Activated CD8-positive, alpha-beta T cell treated with anti-CD3 and anti-CD28 coated beads for 36 hours (primary cell): ENCODE measurements at regions of chr10 and their contacts with region 1.

Region 1: DNA sequence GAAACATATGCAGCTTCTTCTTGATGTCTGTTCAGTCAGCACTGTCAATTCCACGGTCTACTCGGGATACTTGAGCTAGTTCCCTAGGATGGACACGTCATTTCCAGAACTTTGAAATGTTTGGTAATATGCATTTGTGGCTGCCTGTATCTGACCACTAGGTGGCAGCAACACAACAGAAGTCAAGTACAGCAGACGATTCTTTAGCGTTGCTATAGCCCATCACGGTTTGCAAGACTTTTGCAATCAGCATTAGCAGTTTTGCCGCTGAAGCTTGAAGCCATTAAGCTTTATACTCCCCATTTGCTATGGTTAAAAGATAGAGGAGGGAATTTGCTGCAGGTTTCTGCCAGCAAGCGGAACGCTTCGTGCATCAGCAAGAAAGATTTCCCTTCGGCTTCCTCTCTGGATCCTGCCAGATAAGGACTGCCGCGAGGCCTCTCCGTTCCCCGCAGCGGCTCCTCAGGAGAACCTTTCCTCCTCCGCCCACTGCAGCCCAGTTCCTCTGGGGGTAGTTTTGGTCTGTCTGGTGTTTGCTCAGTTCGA is 63.5 kb downstream of the ABCC2 start:
- DNase-seq: peak; percentile 81
- ATAC-seq: peak; percentile 94
- H3K4me3 Mint-ChIP-seq: no peak overlapping the region
- H3K27ac Mint-ChIP-seq: no peak overlapping the region
- H3K4me1 Mint-ChIP-seq: peaks cover 5% of the 10 kb centered on the region
- H3K27me3 Mint-ChIP-seq: no peaks in the 10 kb centered on the region
- CTCF ChIP-seq: peak; percentile 89

Region 2: GRCh38 chr10:99676426-99676825 is 169.5 kb before region 1 on chr10:
- CTCF ChIA-PET with region 1: no interaction called
- POLR2A ChIA-PET with region 1: no interaction called
- intact Hi-C with region 1: no loop called
- DNase-seq: no peak
- ATAC-seq: no peak
- H3K4me3 Mint-ChIP-seq: no peak overlapping the region
- H3K27ac Mint-ChIP-seq: no peak overlapping the region
- H3K4me1 Mint-ChIP-seq: peaks cover 16% of the 10 kb centered on the region
- H3K27me3 Mint-ChIP-seq: no peaks in the 10 kb centered on the region
- CTCF ChIP-seq: no peak

Region 3: GRCh38 chr10:99834410-99834809 is 11.5 kb before region 1 on chr10:
- CTCF ChIA-PET with region 1: interaction called, 23 read pairs
- POLR2A ChIA-PET with region 1: no interaction called
- intact Hi-C with region 1: no loop called
- DNase-seq: peak; percentile 12
- ATAC-seq: peak; percentile 49
- H3K4me3 Mint-ChIP-seq: no peak overlapping the region
- H3K27ac Mint-ChIP-seq: no peak overlapping the region
- H3K4me1 Mint-ChIP-seq: no peaks in the 10 kb centered on the region
- H3K27me3 Mint-ChIP-seq: no peaks in the 10 kb centered on the region
- CTCF ChIP-seq: no peak

Region 4: GRCh38 chr10:99993701-99994689 is 148.1 kb after region 1 on chr10:
- CTCF ChIA-PET with region 1: interaction called, 20 read pairs
- POLR2A ChIA-PET with region 1: no interaction called
- intact Hi-C with region 1: no loop called
- DNase-seq: peak; percentile 90
- ATAC-seq: peak; percentile 97
- H3K4me3 Mint-ChIP-seq: peak overlapping the region; percentile 23
- H3K27ac Mint-ChIP-seq: peak overlapping the region; percentile 59
- H3K4me1 Mint-ChIP-seq: peaks cover 18% of the 10 kb centered on the region
- H3K27me3 Mint-ChIP-seq: no peaks in the 10 kb centered on the region
- CTCF ChIP-seq: no peak

Region 5: GRCh38 chr10:100020142-100020885 is 174.4 kb after region 1 on chr10:
- CTCF ChIA-PET with region 1: interaction called, 25 read pairs
- POLR2A ChIA-PET with region 1: no interaction called
- intact Hi-C with region 1: loop called (anchors 10 kb)
- DNase-seq: peak; percentile 47
- ATAC-seq: peak; percentile 91
- H3K4me3 Mint-ChIP-seq: no peak overlapping the region
- H3K27ac Mint-ChIP-seq: no peak overlapping the region
- H3K4me1 Mint-ChIP-seq: peaks cover 10% of the 10 kb centered on the region
- H3K27me3 Mint-ChIP-seq: peaks cover 6% of the 10 kb centered on the region
- CTCF ChIP-seq: no peak

Region 6: DNA sequence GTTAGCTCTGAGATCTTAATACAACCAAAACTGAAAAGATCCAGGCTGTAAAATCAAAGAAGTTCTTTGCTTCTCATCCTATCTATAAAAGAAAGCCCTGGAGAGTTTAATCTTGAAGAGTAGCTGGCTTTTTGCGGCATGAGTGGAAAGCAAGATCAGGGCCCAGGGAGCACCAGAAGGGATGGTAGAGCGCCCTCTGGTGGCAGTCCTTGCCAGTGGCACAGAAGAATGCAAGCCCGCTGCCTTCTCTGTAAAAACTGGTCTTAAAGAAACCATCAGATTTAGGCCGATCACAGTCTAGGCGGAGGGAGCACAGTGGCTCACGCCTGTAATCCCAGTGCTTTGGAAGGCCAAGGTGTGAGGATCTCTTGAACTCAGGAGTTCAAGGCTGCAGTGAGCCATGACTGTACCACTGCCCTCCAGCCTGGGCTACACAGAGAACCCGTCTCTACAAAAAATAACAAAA is 200.1 kb after region 1 on chr10:
- CTCF ChIA-PET with region 1: interaction called, 196 read pairs
- POLR2A ChIA-PET with region 1: interaction called, 3 read pairs
- intact Hi-C with region 1: loop called (anchors 1 kb)
- DNase-seq: peak; percentile 91
- ATAC-seq: peak; percentile 85
- H3K4me3 Mint-ChIP-seq: no peak overlapping the region
- H3K27ac Mint-ChIP-seq: no peak overlapping the region
- H3K4me1 Mint-ChIP-seq: no peaks in the 10 kb centered on the region
- H3K27me3 Mint-ChIP-seq: peaks cover 4% of the 10 kb centered on the region
- CTCF ChIP-seq: peak; percentile 88